IMR-90 (cell line): ENCODE measurements at regions of chr1 and their contacts with region 1.

Region 1: DNA sequence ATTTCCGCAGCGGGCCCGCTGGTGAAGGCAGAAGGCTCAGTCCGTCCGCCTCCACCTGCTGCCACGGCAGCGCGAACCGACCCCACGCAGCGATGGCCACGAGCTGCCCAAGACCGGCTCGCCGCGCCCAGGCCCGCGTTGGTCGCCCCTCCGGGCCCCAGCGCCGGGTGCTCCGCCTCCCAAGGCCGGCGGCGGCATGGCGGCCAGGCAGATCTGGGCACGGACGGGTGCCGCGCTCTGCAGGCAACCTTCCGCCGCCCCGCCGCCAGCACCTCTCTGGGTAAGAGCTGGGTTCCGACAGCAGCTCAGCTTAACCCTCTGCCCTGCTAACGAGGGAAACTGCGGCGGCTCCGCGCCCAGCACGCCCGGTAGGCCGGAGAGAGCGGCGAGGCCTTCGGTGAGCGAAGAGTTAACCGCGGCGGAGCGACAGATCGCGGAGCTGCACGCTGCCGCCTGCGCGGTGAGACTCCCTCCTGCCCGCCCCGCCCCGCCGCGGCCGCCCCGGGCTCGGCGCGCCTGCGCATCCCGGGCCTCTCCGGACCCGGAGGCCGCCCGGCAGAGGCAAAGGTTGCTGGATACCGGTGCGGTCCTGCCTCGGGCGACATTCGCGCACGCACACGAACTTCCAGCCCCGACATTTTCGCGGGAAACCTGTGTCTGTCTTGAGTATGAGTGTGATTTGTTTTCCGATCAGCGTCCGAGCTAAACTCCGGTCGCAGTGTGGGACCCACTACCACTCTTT is at the start of gene C1orf53:
- DNase-seq: peak; percentile 86
- ATAC-seq: peak; percentile 99
- H3K4me3 ChIP-seq: peak within 1 kb of the TSS; percentile 82
- H3K27ac ChIP-seq: peak within 1 kb of the TSS; percentile 89
- H3K4me1 ChIP-seq: no peaks in the 10 kb centered on the region
- H3K27me3 ChIP-seq: peaks cover 7% of the 10 kb centered on the region
- CTCF ChIP-seq: no peak
- POLR2A ChIP-seq: no peak; the same call in 1 of the 2 replicates
- RAD21 ChIP-seq: no peak
- total RNA-seq, gene C1orf53: 4.2 and 4.8 TPM in 2 replicates

Region 2: GRCh38 chr1:197783510-197783948 is 119.1 kb before region 1 on chr1:
- CTCF ChIA-PET with region 1: no interaction called
- POLR2A ChIA-PET with region 1: no interaction called
- dilution Hi-C with region 1: no loop called
- in situ Hi-C with region 1: no loop called
- intact Hi-C with region 1: loop called (anchors 5 kb)
- DNase-seq: peak; percentile 78
- ATAC-seq: peak; percentile 40
- H3K4me3 ChIP-seq: no peak overlapping the region
- H3K27ac ChIP-seq: peak overlapping the region; percentile 63; the same call in 1 of the 2 replicates
- H3K4me1 ChIP-seq: peaks cover 19% of the 10 kb centered on the region
- H3K27me3 ChIP-seq: no peaks in the 10 kb centered on the region
- CTCF ChIP-seq: no peak
- POLR2A ChIP-seq: no peak
- RAD21 ChIP-seq: no peak

Region 3: GRCh38 chr1:197937892-197938291 is 35.3 kb after region 1 on chr1:
- CTCF ChIA-PET with region 1: no interaction called
- POLR2A ChIA-PET with region 1: no interaction called
- dilution Hi-C with region 1: no loop called
- in situ Hi-C with region 1: no loop called
- intact Hi-C with region 1: no loop called
- DNase-seq: no peak
- ATAC-seq: no peak
- H3K4me3 ChIP-seq: no peak overlapping the region
- H3K27ac ChIP-seq: no peak overlapping the region
- H3K4me1 ChIP-seq: no peaks in the 10 kb centered on the region
- H3K27me3 ChIP-seq: no peaks in the 10 kb centered on the region
- CTCF ChIP-seq: no peak
- POLR2A ChIP-seq: no peak
- RAD21 ChIP-seq: no peak